Activated CD4-positive, alpha-beta memory T cell treated with anti-CD3 and anti-CD28 coated beads, Interleukin-2, amount 10 ng/mL, durations not matched to agents 7 days and 5 days (primary cell): ENCODE measurements at regions of chr2 and their contacts with region 1.

Region 1: GRCh38 chr2:6865346-6866274 is at the start of gene CMPK2:
- DNase-seq: peak; percentile 94
- H3K4me3 Mint-ChIP-seq: peak within 1 kb of the TSS; percentile 97
- H3K27ac Mint-ChIP-seq: peak within 1 kb of the TSS; percentile 99
- H3K4me1 Mint-ChIP-seq: peaks cover 55% of the 10 kb centered on the region
- H3K27me3 Mint-ChIP-seq: no peaks in the 10 kb centered on the region
- total RNA-seq, gene CMPK2: 84.8 to 91.1 TPM

Region 2: GRCh38 chr2:6909431-6910385 is 44.1 kb after region 1 on chr2:
- CTCF ChIA-PET with region 1: interaction called, 8 read pairs
- POLR2A ChIA-PET with region 1: interaction called, 51 read pairs
- DNase-seq: peak; percentile 66
- H3K4me3 Mint-ChIP-seq: peak overlapping the region; percentile 25
- H3K27ac Mint-ChIP-seq: peak overlapping the region; percentile 67
- H3K4me1 Mint-ChIP-seq: peaks cover 81% of the 10 kb centered on the region
- H3K27me3 Mint-ChIP-seq: peaks cover 56% of the 10 kb centered on the region

Region 3: DNA sequence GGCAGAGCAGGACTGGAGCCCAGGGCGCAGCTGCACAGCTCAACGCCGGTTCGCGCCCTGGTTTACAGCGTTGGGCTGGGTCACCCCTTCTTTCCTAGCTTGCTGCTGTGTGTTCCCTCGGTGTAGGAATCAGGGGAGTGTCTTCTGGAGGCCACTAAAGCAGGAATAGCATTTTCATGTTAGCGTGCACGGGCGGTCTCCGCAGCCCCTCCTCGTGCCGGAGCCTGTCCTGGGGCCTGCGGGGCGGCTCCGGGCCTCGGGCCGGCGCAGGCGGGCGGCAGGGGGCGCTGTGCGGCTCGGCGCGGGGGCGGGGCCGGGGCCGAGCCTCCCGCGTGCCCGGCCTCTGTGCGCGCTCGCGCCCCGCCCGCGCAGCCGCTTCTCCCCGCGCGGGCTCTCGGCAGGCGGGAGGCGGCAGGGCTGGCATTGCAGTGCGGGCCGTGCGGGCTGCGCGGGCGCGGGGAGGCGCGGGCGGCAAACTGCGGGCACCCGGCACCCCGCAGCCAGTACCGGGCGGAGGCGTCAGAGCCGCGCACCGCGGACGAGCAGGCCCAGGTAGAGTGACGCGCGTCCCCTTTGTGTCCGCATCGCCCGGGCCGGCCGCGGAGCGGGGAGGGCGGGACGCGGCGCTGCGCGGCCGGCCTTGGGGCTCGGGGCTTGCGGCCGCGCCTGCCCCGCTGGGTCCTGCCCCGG is 51.6 kb after region 1 on chr2 and contains the start of gene RNF144A:
- CTCF ChIA-PET with region 1: interaction called, 16 read pairs
- POLR2A ChIA-PET with region 1: interaction called, 51 read pairs
- DNase-seq: peak; percentile 72
- H3K4me3 Mint-ChIP-seq: peak within 1 kb of the TSS; percentile 60
- H3K27ac Mint-ChIP-seq: peak within 1 kb of the TSS; percentile 59
- H3K4me1 Mint-ChIP-seq: peaks cover 44% of the 10 kb centered on the region
- H3K27me3 Mint-ChIP-seq: peaks cover 40% of the 10 kb centered on the region
- total RNA-seq, gene RNF144A: 20.0 to 21.0 TPM